ENCODE measurements at regions of chr10 and their contacts with region 1.

Region 1: DNA sequence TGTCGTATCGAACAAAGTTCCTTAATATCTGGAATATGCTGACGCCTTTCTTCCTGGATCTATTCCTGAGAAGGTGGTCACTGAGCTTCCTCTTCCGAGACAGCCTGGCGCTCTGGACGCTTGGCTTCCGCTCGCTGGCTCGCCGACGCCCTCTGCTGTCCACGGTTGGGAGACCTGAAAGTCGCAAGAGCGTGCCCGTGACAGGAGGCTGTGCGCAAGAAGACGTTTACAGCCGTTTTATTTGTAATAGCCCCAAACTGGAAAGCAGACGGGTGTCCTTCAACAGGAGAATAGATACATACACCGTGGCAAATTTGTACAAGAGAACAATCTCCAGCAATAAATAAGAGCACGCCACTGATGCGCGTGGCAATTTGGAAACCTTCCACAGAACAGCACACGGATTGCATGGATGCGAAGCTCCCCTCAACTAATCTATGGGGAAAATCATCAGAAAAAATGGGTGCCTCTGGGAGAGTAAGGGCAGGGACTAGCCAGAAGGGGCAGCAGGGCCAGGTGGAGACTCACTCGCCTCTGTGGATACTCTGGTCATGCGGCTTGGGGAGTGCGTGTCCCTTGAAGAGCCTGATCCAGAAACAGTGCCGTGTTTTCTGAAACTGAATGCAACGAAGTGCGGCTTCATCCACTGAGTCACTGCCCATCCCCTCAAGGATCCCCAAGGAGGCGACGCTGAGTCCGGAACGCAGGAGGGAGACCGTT is 41.5 kb upstream of the BNIP3 start:
- DNase-seq: peak; percentile 55
- ATAC-seq: peak; percentile 89
- H3K4me3 ChIP-seq: peak overlapping the region in 2 of 3 experiments; percentile 40 to 53; a peak in 4 of 6 replicates
- H3K27ac ChIP-seq: no peak overlapping the region
- H3K4me1 ChIP-seq: peaks cover 14% of the 10 kb centered on the region
- H3K27me3 ChIP-seq: peaks cover 2 to 35% of the 10 kb centered on the region in 2 experiments
- CTCF ChIP-seq: peak; percentile 98
- EP300 ChIP-seq: no peak
- POLR2A ChIP-seq: no peak
- RAD21 ChIP-seq: peak; percentile 90

Region 2: DNA sequence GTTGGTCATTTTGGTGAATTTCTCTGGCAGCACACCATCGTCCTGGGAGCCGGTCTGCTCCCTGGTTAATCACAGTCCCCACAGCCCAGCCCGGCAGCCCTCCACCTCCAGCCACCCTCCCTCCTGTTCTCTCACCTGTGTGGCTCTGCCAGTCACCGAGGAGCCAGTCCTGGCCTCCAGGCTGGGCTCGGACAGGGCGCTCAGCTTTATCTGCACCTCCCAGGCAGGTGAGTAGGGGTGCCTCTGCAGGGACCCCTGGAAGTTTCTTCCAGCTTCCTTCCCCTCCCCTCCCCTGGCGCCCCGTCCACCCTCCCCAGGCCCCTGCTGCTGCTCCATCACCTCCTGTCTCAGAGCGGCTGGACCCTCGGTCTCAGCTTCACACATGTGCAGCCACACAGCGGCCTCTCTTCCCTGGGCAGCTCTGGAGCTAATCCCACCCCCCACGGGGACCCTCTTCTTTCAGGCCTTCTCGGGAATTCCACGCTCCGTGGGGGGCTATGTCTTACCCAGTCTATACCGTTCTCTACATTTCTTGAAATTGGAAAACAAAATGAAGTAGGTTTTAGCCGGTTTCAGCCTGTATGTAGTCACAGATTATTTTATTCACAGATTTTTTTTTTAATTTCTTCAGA is 336.4 kb before region 1 on chr10:
- CTCF ChIA-PET with region 1: no interaction called
- POLR2A ChIA-PET with region 1: no interaction called
- in situ Hi-C with region 1: no loop called
- intact Hi-C with region 1: no loop called
- DNase-seq: no peak
- ATAC-seq: no peak
- H3K4me3 ChIP-seq: no peak overlapping the region
- H3K27ac ChIP-seq: no peak overlapping the region
- H3K4me1 ChIP-seq: no peaks in the 10 kb centered on the region
- H3K27me3 ChIP-seq: no peaks in the 10 kb centered on the region
- CTCF ChIP-seq: no peak
- EP300 ChIP-seq: no peak
- POLR2A ChIP-seq: no peak
- RAD21 ChIP-seq: no peak

Region 3: DNA sequence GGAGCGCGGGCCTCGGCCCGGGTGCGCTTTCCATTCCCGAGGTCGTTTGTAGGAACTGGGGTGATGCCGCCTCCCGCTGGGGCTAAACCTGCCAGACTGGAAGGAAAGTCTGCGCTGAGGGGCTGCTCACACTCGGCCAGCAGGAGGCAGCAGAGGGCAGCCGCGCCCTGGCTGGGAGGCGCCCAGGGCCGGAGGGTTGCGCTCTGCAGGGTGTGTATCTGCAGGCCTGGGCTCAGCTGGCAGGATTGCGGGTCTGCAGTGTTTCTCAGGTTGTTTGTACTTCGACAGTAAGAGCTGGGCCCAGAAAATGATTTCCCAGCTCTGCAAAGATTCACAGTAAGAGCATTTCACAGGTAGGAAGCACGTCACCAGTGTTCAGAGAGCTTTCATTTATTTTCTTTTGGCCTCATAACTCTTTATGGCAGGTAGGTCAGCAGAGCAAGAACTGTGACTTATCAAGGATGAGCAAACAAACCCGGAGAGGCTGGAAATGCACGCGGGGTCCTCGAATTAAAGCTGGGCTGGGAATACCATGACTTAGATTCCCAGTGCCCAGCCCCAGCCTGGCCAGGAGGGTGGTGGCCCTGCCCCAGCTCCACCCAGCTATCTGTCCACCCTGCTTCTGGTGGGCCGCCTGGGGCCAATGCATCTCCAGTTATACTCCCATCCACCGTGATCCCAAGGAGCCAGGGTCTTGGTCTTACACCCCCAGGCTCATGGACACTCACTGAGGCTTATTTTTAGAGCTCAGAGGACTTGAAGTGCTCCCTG is 137.7 kb before region 1 on chr10:
- CTCF ChIA-PET with region 1: interaction called, 16 read pairs
- POLR2A ChIA-PET with region 1: no interaction called
- in situ Hi-C with region 1: loop called (anchors 5 kb)
- intact Hi-C with region 1: loop called (anchors 1 kb)
- DNase-seq: peak; percentile 53
- ATAC-seq: peak; percentile 98
- H3K4me3 ChIP-seq: no peak overlapping the region; a peak in 1 of 6 replicates
- H3K27ac ChIP-seq: no peak overlapping the region
- H3K4me1 ChIP-seq: peaks cover 22% of the 10 kb centered on the region
- H3K27me3 ChIP-seq: peaks cover 0 to 2% of the 10 kb centered on the region in 2 experiments; a peak in 1 of 5 replicates
- CTCF ChIP-seq: peak; percentile 99
- EP300 ChIP-seq: no peak
- POLR2A ChIP-seq: no peak
- RAD21 ChIP-seq: peak; percentile 92

Region 4: GRCh38 chr10:131891196-131891928 is 131.9 kb before region 1 on chr10:
- CTCF ChIA-PET with region 1: no interaction called
- POLR2A ChIA-PET with region 1: no interaction called
- in situ Hi-C with region 1: loop called (anchors 5 kb)
- intact Hi-C with region 1: no loop called
- DNase-seq: peak; percentile 37
- ATAC-seq: peak; percentile 93
- H3K4me3 ChIP-seq: peak overlapping the region; percentile 36 to 57 (median 47); a peak in 5 of 6 replicates
- H3K27ac ChIP-seq: peak overlapping the region; percentile 44
- H3K4me1 ChIP-seq: peaks cover 39% of the 10 kb centered on the region
- H3K27me3 ChIP-seq: peaks cover 3 to 23% of the 10 kb centered on the region in 2 experiments; a peak in 3 of 5 replicates
- CTCF ChIP-seq: peak; percentile 66
- EP300 ChIP-seq: no peak
- POLR2A ChIP-seq: no peak
- RAD21 ChIP-seq: peak; percentile 46

Region 5: GRCh38 chr10:131981429-131982184 is 41.6 kb before region 1 on chr10 and contains the start of gene BNIP3:
- CTCF ChIA-PET with region 1: no interaction called
- POLR2A ChIA-PET with region 1: no interaction called
- in situ Hi-C with region 1: loop called (anchors 5 kb)
- intact Hi-C with region 1: loop called (anchors 2 kb)
- DNase-seq: peak; percentile 88
- ATAC-seq: peak; percentile 87
- H3K4me3 ChIP-seq: peak within 1 kb of the TSS; percentile 88 to 98 (median 91)
- H3K27ac ChIP-seq: peak within 1 kb of the TSS; percentile 64
- H3K4me1 ChIP-seq: peaks cover 53% of the 10 kb centered on the region
- H3K27me3 ChIP-seq: no peaks in the 10 kb centered on the region; a peak in 1 of 5 replicates
- CTCF ChIP-seq: no peak
- EP300 ChIP-seq: peak in 1 of 2 experiments; percentile 8; a peak in 1 of 4 replicates
- POLR2A ChIP-seq: peak; percentile 82 to 93
- RAD21 ChIP-seq: 0 out of 2 replicates have a peak, but pooled peaks have one; percentile 6
- total RNA-seq, gene BNIP3: 73.7 and 86.7 TPM in 2 replicates

Region 6: DNA sequence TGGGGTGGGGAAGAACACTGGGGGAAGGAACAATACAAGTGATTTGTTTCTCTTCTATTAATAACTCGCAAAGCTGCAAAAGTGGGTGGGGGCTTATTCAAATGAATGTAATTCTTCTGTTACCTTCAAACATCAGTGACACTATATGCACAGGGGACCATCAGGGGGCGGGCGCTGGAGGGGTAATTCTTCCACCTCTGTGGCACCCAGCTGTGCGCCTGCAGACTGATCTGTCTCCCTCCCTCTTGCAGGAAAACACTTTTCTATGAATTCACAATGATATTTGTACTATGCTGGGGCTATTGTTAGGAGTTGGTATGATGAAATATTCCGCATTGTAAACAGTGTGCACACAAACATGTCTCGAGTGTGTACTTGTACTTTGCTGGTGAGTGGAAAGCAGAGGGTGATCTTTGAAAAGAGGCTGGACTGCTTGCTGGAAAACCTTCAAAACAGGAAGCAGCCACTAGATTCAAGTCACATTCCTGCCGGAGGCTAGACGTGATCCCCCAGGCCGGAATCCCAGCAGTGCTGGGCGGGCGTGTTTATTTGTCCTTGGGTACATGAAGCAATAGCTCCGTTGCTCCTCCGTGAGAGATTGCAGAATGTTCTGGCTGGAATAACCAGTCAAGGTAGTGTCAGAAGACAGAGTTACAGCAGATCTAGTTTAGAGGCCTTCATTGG is 25.7 kb before region 1 on chr10:
- CTCF ChIA-PET with region 1: no interaction called
- POLR2A ChIA-PET with region 1: interaction called, 3 read pairs
- in situ Hi-C with region 1: no loop called
- intact Hi-C with region 1: loop called (anchors 2 kb)
- DNase-seq: peak; percentile 92
- ATAC-seq: peak; percentile 81
- H3K4me3 ChIP-seq: peak overlapping the region; percentile 42 to 53 (median 47); a peak in 5 of 6 replicates
- H3K27ac ChIP-seq: peak overlapping the region; percentile 81
- H3K4me1 ChIP-seq: peaks cover 85% of the 10 kb centered on the region
- H3K27me3 ChIP-seq: 0 out of 5 replicates have a peak, but pooled peaks cover 0 to 2% of the 10 kb centered on the region in 2 experiments
- CTCF ChIP-seq: peak; percentile 6; the same call in 1 of the 2 replicates
- EP300 ChIP-seq: peak in 1 of 2 experiments; percentile 79; a peak in 3 of 4 replicates
- POLR2A ChIP-seq: peak in 1 of 2 experiments; percentile 48; a peak in 1 of 4 replicates
- RAD21 ChIP-seq: no peak

Region 7: GRCh38 chr10:132411561-132412253 is 388.5 kb after region 1 on chr10:
- CTCF ChIA-PET with region 1: no interaction called
- POLR2A ChIA-PET with region 1: no interaction called
- in situ Hi-C with region 1: no loop called
- intact Hi-C with region 1: no loop called
- DNase-seq: no peak
- ATAC-seq: no peak
- H3K4me3 ChIP-seq: peak overlapping the region in 1 of 3 experiments; percentile 3; a peak in 1 of 6 replicates
- H3K27ac ChIP-seq: no peak overlapping the region
- H3K4me1 ChIP-seq: peaks cover 45% of the 10 kb centered on the region
- H3K27me3 ChIP-seq: no peaks in the 10 kb centered on the region
- CTCF ChIP-seq: no peak
- EP300 ChIP-seq: no peak
- POLR2A ChIP-seq: no peak
- RAD21 ChIP-seq: no peak